ENCODE measurements at regions of chr9 and their contacts with region 1.

Region 1: DNA sequence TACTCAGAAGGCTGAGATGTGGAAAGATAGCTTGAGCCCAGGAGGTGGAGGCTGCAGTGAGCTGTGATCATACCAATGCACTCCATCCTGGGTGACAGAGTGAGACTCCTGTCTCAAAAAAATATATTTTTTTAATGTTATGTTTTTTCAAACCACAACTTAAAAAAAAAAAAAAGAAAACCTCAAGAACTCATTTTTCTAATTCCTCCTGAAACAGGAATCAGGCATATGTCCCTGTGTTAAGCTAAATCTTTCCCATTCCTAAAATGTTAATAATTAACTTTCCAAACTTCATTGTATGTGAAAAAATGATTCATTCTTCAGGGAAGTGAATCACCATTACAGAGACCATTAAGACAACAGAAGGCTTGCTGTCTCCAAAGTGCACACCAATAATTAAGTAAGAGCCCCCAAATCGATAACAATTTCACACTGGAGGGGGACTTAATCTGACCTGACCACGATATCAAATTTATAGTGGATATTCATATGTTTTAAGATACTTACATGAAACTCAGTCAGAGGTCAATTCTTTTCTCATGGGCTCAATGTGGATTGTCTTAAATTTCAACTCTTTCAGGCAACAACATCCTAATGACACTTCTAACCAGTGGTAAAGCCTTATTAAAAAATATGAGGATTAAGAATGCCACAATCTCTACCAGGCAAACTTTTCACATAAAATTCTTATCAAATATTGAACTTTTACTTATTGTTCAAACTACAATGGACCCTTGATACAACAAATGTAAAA is 5.2 kb downstream of the CEMIP2 start:
- DNase-seq: peak; percentile 80
- H3K4me3 ChIP-seq: no peak overlapping the region
- H3K27me3 ChIP-seq: no peaks in the 10 kb centered on the region
- CTCF ChIP-seq: no peak

Region 2: GRCh38 chr9:70043689-70044489 is 1719.2 kb before region 1 on chr9 and contains the start of gene MAMDC2:
- CTCF ChIA-PET with region 1: no interaction called
- POLR2A ChIA-PET with region 1: interaction called, 10 read pairs
- DNase-seq: no peak
- H3K4me3 ChIP-seq: peak within 1 kb of the TSS; percentile 49
- H3K27me3 ChIP-seq: no peaks in the 10 kb centered on the region
- CTCF ChIP-seq: no peak
- polyA plus RNA-seq, gene MAMDC2: 28.0 and 35.8 TPM in 2 replicates

Region 3: GRCh38 chr9:71646131-71646530 is 116.9 kb before region 1 on chr9:
- CTCF ChIA-PET with region 1: no interaction called
- POLR2A ChIA-PET with region 1: interaction called, 12 read pairs
- DNase-seq: no peak
- H3K4me3 ChIP-seq: no peak overlapping the region
- H3K27me3 ChIP-seq: no peaks in the 10 kb centered on the region
- CTCF ChIP-seq: no peak

Region 4: GRCh38 chr9:72554221-72554641 is 791.2 kb after region 1 on chr9:
- CTCF ChIA-PET with region 1: no interaction called
- POLR2A ChIA-PET with region 1: interaction called, 11 read pairs
- DNase-seq: peak; percentile 99
- H3K4me3 ChIP-seq: no peak overlapping the region
- H3K27me3 ChIP-seq: no peaks in the 10 kb centered on the region
- CTCF ChIP-seq: no peak